Mammary epithelial cell (primary cell): ENCODE measurements at regions of chr17 and their contacts with region 1.

Region 1: DNA sequence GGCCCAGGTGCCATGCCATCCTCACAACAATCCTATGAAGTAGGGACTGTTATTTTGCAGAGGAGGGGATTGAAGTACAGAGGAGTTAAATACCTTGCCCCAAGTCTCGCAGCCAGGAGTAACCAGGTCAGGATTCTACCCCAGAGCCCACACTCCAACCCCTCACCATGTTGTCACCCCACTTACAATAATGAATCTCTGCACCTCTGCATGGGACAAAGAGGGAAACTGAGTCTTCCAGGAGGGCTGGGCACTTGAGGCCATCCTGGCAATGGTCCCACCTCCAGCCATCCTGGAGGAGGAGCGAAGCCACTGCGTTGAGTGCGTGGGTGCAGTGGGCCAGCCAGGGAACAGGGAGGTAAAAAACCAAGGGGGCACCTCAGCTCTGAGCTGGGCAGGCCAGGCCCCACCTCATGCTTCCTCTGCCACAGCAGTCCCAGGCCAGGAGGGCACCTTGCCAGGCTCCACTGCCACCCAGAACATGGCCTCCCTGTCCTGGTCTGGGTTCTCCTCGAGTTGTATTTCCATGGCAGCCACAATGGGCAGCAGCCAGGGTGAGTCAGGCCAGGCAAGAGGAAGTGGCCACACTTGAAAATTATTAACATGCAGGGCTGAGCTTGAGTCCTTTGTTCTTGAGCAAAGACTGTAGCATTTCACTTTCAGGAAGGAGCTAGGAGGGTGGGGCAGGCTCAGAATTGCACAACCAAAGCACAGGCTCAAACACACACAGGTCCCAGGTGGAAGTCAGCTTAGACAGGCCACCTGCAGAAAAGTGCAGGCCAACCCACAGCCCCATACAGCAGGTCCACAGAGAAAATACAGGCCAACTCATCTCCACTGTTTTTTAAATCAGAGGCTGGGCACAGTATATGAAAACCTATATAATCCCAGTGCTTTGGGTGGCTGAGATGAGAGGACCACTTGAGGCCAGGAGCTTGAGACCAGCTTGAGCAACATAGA is 52.1 kb downstream of the CUEDC1 start:
- DNase-seq: peak; percentile 97
- H3K4me3 ChIP-seq: no peak overlapping the region
- H3K27ac ChIP-seq: peak overlapping the region; percentile 68
- H3K4me1 ChIP-seq: peaks cover 57% of the 10 kb centered on the region
- H3K27me3 ChIP-seq: no peaks in the 10 kb centered on the region
- CTCF ChIP-seq: no peak

Region 2: DNA sequence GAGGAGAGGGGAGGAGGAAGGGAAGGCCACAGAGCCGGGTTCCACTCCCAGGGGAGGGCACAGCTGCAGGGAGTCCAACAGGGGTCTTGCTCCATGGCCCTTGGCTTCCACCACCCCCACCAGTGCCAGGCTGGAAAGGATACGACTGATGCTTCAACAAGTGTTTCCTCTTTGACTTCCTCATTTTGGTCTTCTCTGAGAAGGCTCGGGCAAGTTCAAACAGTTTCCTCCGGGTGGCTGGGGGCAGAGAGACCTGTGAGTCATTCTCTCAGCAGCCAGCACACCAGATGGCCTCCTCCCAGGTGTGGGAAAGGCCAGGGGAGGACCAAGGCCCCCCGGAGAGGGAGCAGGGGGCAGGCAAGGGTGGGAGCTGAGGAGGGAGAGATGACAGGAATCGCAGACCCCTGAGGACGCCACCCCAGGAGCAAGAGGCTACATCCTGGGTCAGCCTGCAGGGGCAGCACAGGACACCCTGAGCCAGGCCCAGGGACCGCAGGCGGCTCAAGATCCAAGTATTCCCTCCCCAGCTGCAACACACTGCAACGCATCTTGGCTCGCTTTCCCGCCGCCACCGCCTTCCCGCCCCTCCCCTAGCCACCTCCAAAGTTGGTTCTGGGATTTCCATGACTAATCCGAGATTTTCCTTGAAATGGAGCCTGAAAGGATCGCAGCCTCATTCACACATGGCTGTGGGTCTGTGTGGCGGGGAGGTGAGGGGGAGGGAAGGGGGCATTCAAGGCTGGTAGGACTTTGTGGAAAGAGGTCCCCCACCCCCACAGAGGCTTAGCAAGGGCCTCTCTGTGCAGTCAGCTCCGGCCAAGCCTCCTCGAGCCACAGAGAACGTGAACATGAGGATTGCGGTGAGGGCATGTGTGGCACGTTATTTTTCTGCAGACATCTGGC is 34.8 kb before region 1 on chr17:
- CTCF ChIA-PET with region 1: no interaction called
- dilution Hi-C with region 1: no loop called
- in situ Hi-C with region 1: no loop called
- intact Hi-C with region 1: loop called (anchors 2 kb)
- DNase-seq: peak; percentile 92
- H3K4me3 ChIP-seq: peak overlapping the region in 1 of 3 experiments; percentile 23
- H3K27ac ChIP-seq: peak overlapping the region; percentile 64
- H3K4me1 ChIP-seq: peaks cover 39% of the 10 kb centered on the region
- H3K27me3 ChIP-seq: no peaks in the 10 kb centered on the region
- CTCF ChIP-seq: peak; percentile 19 to 46

Region 3: GRCh38 chr17:57875309-57876115 is 27.6 kb before region 1 on chr17:
- CTCF ChIA-PET with region 1: no interaction called
- dilution Hi-C with region 1: no loop called
- in situ Hi-C with region 1: no loop called
- intact Hi-C with region 1: loop called (anchors 1 kb)
- DNase-seq: peak; percentile 91
- H3K4me3 ChIP-seq: no peak overlapping the region
- H3K27ac ChIP-seq: peak overlapping the region; percentile 61
- H3K4me1 ChIP-seq: peaks cover 70% of the 10 kb centered on the region
- H3K27me3 ChIP-seq: no peaks in the 10 kb centered on the region
- CTCF ChIP-seq: peak; percentile 57 to 58

Region 4: GRCh38 chr17:57946798-57947358 is 43.8 kb after region 1 on chr17:
- CTCF ChIA-PET with region 1: no interaction called
- dilution Hi-C with region 1: no loop called
- in situ Hi-C with region 1: no loop called
- intact Hi-C with region 1: loop called (anchors 1 kb)
- DNase-seq: peak; percentile 69
- H3K4me3 ChIP-seq: no peak overlapping the region
- H3K27ac ChIP-seq: no peak overlapping the region
- H3K4me1 ChIP-seq: peaks cover 39% of the 10 kb centered on the region
- H3K27me3 ChIP-seq: no peaks in the 10 kb centered on the region
- CTCF ChIP-seq: no peak

Region 5: DNA sequence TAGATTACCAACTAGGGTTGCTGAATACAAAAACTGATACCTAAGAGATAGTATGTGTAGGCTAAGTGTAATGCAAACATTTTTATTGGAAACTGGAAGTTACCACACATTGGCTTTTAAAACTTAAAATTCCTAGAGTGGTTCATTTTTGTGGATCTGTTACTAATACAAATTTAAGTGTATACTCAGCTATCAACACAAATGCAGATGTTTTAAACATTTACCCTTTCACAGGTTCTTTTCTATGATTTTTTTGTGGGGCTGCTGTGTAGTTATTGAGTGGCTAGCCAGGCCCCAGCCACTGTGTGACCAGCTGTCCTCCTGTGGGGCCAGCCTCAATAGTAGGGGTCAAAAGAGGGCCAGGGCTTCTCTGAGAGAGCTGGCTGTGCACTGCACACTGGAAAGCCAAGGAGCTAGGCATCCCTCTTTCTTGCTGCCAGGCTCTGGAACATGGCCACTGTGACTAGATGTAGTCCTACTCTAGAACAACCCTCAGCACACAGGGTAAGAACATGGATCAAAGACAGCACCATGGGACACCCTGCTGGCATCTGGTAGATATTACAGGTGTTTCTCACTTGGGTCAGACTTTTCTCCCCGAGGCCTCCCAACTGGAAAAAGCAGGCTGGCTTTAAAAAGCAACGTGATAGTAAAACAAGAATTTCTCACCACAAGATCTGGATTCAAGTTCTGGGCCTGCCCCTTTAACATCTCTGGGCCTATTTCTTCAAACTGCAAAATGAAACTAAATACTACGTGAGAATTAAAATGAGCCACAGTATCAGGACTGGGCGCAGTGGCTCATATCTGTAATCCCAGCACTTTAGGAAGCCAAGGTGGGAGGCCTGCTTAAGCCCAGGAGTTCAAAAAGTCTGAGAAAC is 92.2 kb after region 1 on chr17:
- CTCF ChIA-PET with region 1: interaction called, 3 read pairs
- dilution Hi-C with region 1: loop called (anchors 5 kb)
- in situ Hi-C with region 1: no loop called
- intact Hi-C with region 1: no loop called
- DNase-seq: peak; percentile 61
- H3K4me3 ChIP-seq: no peak overlapping the region
- H3K27ac ChIP-seq: no peak overlapping the region
- H3K4me1 ChIP-seq: no peaks in the 10 kb centered on the region
- H3K27me3 ChIP-seq: no peaks in the 10 kb centered on the region
- CTCF ChIP-seq: peak; percentile 69 to 81